ENCODE measurements at regions of chr21 and their contacts with region 1.

Region 1: GRCh38 chr21:25421327-25422028 is 185.8 kb downstream of the MRPL39 start:
- H3K4me3 Mint-ChIP-seq: no peak overlapping the region
- H3K27ac Mint-ChIP-seq: peak overlapping the region; percentile 16
- H3K4me1 Mint-ChIP-seq: peaks cover 21% of the 10 kb centered on the region
- H3K27me3 Mint-ChIP-seq: peaks cover 2% of the 10 kb centered on the region

Region 2: GRCh38 chr21:25370311-25370744 is 51.1 kb before region 1 on chr21:
- intact Hi-C with region 1: no loop called
- H3K4me3 Mint-ChIP-seq: no peak overlapping the region
- H3K27ac Mint-ChIP-seq: no peak overlapping the region
- H3K4me1 Mint-ChIP-seq: no peaks in the 10 kb centered on the region
- H3K27me3 Mint-ChIP-seq: no peaks in the 10 kb centered on the region

Region 3: DNA sequence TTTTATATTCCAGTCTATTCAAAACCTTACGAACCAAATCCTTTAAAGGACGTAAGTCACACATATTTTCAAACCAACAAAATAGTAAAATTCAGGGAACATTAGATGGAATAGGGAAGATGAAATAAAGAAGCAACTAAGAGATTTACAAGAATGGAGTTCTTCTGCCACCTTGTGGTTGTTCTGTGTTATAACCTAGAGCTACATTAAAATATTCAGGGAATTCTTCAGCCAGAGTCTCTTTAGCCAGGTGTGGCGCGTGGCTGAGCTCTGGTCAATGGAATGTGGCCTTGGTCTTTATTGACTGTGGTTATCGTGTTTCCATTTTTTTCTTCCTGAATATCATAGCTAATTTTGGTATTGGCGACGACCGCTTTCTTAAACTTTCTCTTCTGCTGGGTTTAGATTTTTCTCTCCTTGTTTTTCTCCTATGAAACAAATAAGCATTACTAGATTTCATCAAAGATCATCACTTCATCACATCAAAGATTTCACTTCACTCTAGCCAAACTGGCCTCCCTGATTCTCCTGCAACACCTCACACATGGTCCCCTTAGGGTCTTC is 35.5 kb before region 1 on chr21:
- intact Hi-C with region 1: no loop called
- H3K4me3 Mint-ChIP-seq: no peak overlapping the region
- H3K27ac Mint-ChIP-seq: no peak overlapping the region
- H3K4me1 Mint-ChIP-seq: peaks cover 5% of the 10 kb centered on the region
- H3K27me3 Mint-ChIP-seq: peaks cover 7% of the 10 kb centered on the region

Region 4: DNA sequence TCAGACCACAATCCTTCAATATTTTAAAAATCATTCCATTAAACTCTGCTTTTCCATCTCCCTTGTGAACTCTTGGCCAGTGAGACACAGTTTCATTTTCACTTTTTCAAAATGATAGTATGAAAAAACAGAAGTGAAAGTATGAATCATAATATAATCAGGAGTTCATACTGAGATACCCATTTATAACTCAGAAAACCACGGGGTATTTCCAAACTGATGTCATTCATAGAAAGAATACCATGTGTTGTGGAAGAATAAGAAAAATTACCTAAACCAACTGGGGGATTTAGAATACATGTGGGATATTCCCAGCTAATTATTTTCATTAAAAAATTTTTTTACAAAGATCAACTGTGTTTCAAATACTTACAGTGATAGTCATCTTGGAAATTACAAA is 35.9 kb after region 1 on chr21:
- intact Hi-C with region 1: no loop called
- H3K4me3 Mint-ChIP-seq: no peak overlapping the region
- H3K27ac Mint-ChIP-seq: no peak overlapping the region
- H3K4me1 Mint-ChIP-seq: peaks cover 16% of the 10 kb centered on the region
- H3K27me3 Mint-ChIP-seq: no peaks in the 10 kb centered on the region

Region 5: GRCh38 chr21:25561668-25562641 is 140.5 kb after region 1 on chr21:
- intact Hi-C with region 1: loop called (anchors 5 kb)
- H3K4me3 Mint-ChIP-seq: peak overlapping the region; percentile 85
- H3K27ac Mint-ChIP-seq: peak overlapping the region; percentile 88
- H3K4me1 Mint-ChIP-seq: peaks cover 39% of the 10 kb centered on the region
- H3K27me3 Mint-ChIP-seq: peaks cover 2% of the 10 kb centered on the region

Region 6: GRCh38 chr21:25708467-25709065 is 287.1 kb after region 1 on chr21:
- intact Hi-C with region 1: loop called (anchors 2 kb)
- H3K4me3 Mint-ChIP-seq: no peak overlapping the region
- H3K27ac Mint-ChIP-seq: no peak overlapping the region
- H3K4me1 Mint-ChIP-seq: no peaks in the 10 kb centered on the region
- H3K27me3 Mint-ChIP-seq: no peaks in the 10 kb centered on the region

Measured in dendritic cell treated with granulocyte-macrophage colony-stimulating factor and Interleukin-4, amounts not matched to agents 40 ng/mL and 50 ng/mL, for 4 days (primary cell).